Activated naive CD4-positive, alpha-beta T cell treated with anti-CD3 and anti-CD28 coated beads, Interleukin-2, amount 10 ng/mL, durations not matched to agents 7 days and 5 days (primary cell): ENCODE measurements at regions of chr11 and their contacts with region 1.

Region 1: DNA sequence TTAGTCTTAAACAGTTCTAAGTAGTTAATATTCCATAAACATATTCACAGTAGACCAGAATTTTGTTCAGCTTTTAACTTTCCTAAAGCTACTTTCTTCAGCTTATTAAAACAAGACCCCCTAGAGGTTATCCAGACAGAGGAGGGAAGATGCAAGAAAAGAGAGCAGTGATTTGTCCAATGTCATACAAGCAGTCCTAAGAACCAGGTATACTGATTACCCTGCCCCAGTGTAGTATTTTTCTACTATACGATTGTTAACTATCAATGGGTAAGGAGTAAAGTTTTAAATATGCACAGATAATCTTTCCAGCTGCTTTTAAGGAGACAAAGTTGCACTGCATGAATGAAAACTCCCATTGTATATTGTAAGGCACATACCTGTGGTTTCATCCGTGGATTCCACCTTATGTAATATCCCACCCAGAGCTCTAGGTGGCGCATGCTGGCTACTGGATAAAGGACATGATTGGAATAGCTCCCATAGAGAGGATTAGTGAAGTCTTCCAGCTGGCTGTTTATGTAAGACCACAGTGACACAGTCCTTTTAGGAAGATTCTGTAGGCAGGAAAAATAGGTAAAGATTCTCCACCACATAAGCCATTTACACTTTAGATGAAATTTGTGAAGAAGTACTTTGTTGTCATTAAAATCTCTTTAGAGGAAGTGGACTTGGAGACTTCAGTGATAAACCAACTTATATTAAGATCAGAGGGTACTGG is 45.6 kb downstream of the CEP57 start:
- DNase-seq: peak; percentile 68
- H3K4me3 Mint-ChIP-seq: no peak overlapping the region
- H3K27ac Mint-ChIP-seq: no peak overlapping the region
- H3K4me1 Mint-ChIP-seq: no peaks in the 10 kb centered on the region
- H3K27me3 Mint-ChIP-seq: no peaks in the 10 kb centered on the region

Region 2: GRCh38 chr11:95144313-95145235 is 691.4 kb before region 1 on chr11:
- CTCF ChIA-PET with region 1: no interaction called
- DNase-seq: no peak
- H3K4me3 Mint-ChIP-seq: no peak overlapping the region
- H3K27ac Mint-ChIP-seq: no peak overlapping the region
- H3K4me1 Mint-ChIP-seq: peaks cover 15% of the 10 kb centered on the region
- H3K27me3 Mint-ChIP-seq: peaks cover 53% of the 10 kb centered on the region

Region 3: GRCh38 chr11:95849087-95849825 is 13.3 kb after region 1 on chr11:
- CTCF ChIA-PET with region 1: interaction called, 15 read pairs
- DNase-seq: peak; percentile 43
- H3K4me3 Mint-ChIP-seq: no peak overlapping the region
- H3K27ac Mint-ChIP-seq: no peak overlapping the region
- H3K4me1 Mint-ChIP-seq: no peaks in the 10 kb centered on the region
- H3K27me3 Mint-ChIP-seq: no peaks in the 10 kb centered on the region

Region 4: DNA sequence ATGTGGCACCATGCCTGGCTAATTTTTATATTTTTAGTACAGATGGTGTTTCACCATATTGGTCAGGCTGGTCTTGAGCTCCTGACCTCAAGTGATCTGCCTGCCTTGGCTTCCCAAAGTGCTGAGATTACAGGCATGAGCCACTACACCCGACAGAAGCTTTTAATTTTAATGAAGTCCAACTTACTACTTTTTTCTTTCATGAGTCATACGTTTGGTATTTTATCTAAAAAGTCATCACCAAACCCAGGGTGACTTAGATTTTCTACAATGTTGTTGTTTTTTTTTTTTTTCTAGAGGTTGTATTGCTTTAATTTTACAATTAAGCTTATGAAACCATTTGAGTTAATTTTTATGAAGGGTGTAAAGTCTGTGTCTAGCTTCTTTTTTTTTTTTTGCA is 588.8 kb after region 1 on chr11:
- CTCF ChIA-PET with region 1: interaction called, 25 read pairs
- DNase-seq: no peak
- H3K4me3 Mint-ChIP-seq: no peak overlapping the region
- H3K27ac Mint-ChIP-seq: no peak overlapping the region
- H3K4me1 Mint-ChIP-seq: no peaks in the 10 kb centered on the region
- H3K27me3 Mint-ChIP-seq: peaks cover 20% of the 10 kb centered on the region